ENCODE measurements at regions of chr18 and their contacts with region 1.

Region 1: DNA sequence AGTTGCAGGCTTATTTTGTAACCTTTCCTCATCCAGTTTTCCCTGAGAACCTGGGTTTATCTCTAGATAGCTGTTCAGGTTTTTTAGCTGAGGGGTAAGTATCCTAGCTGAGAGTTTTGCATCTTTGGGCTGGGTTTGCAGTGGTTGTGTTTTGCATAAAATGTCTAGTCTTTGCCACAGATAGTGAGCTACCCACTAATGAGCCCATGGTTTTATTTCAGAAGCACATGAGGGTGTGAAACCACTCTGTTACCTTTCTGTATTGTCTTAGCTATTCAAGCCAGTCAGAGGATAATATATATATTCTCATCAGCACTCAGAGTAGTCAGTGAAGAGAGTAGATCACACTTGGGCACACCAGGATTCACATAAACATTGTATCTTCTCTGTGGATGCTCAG is 24.6 kb upstream of the TXNDC2 start:
- DNase-seq: no peak
- H3K4me3 Mint-ChIP-seq: no peak overlapping the region
- H3K27ac Mint-ChIP-seq: peak overlapping the region; percentile 95
- H3K4me1 Mint-ChIP-seq: peaks cover 32% of the 10 kb centered on the region
- H3K27me3 Mint-ChIP-seq: peaks cover 6% of the 10 kb centered on the region

Region 2: GRCh38 chr18:9743200-9744016 is 117.7 kb before region 1 on chr18:
- intact Hi-C with region 1: no loop called
- DNase-seq: no peak
- H3K4me3 Mint-ChIP-seq: no peak overlapping the region
- H3K27ac Mint-ChIP-seq: no peak overlapping the region
- H3K4me1 Mint-ChIP-seq: no peaks in the 10 kb centered on the region
- H3K27me3 Mint-ChIP-seq: peaks cover 40% of the 10 kb centered on the region

Region 3: GRCh38 chr18:9898792-9899549 is 37.8 kb after region 1 on chr18:
- intact Hi-C with region 1: loop called (anchors 5 kb)
- DNase-seq: no peak
- H3K4me3 Mint-ChIP-seq: peak overlapping the region; percentile 27
- H3K27ac Mint-ChIP-seq: peak overlapping the region; percentile 80
- H3K4me1 Mint-ChIP-seq: peaks cover 32% of the 10 kb centered on the region
- H3K27me3 Mint-ChIP-seq: no peaks in the 10 kb centered on the region